CD8-positive, alpha-beta memory T cell (primary cell): ENCODE measurements at regions of chr15 and their contacts with region 1.

Region 1: DNA sequence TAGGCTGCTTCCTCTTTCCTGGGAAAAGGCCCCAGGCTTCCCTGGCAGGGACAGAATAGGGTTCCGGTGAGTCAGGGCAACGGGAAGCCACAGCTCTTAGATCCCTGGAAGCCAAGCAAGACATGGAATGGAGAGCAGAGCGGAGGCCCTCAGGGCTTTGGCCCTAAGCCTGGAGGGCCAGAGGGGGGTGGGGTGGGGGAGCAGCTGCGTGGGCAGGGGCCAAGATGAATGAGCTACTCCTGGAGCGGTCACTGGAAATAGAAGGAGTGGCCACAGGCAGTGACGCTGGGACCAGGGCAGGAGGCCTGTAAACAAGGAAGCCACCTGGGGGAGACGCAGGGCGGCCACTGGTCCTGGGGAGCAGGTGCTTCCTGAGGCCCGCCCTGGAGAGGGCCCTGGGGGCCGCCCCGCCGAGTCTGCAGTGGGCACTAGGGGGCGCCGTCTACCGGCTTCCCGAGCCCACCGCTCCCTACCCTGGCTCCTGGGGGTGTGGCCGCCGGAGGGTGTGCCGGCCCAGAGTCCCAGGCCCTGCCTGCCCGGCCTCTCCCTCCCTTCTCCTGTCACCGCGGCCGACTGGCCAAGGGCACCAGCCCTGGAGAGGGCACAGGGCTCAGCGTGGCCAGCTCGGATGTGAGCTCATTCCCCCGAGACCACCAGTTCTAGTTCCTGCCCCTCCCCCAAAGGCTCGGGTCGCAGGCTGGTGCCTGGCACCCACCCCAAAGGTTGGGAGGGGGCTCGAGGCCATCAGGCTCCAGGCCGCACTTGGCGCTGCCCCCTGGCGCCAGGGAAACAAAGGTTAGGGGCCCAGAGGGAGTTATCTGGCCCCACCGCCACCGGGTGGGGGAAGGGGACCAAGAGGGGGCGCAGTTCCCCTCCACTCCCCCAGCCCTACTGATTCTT is 12.1 kb downstream of the VPS18 start:
- DNase-seq: peak; percentile 63 to 77 (median 70)
- H3K4me3 ChIP-seq: peak overlapping the region; percentile 84
- H3K4me3 Mint-ChIP-seq: peak overlapping the region; percentile 81 to 91 (median 86)
- H3K27ac ChIP-seq: peak overlapping the region; percentile 59
- H3K27ac Mint-ChIP-seq: peak overlapping the region in 7 of 8 donors; percentile 35 to 95 (median 90)
- H3K4me1 ChIP-seq: peaks cover 26% of the 10 kb centered on the region
- H3K4me1 Mint-ChIP-seq: peaks cover 12 to 48% (median 25%) of the 10 kb centered on the region in 3 donors
- H3K27me3 ChIP-seq: no peaks in the 10 kb centered on the region
- H3K27me3 Mint-ChIP-seq: peaks cover 0 to 2% of the 10 kb centered on the region in 2 donors

Region 2: DNA sequence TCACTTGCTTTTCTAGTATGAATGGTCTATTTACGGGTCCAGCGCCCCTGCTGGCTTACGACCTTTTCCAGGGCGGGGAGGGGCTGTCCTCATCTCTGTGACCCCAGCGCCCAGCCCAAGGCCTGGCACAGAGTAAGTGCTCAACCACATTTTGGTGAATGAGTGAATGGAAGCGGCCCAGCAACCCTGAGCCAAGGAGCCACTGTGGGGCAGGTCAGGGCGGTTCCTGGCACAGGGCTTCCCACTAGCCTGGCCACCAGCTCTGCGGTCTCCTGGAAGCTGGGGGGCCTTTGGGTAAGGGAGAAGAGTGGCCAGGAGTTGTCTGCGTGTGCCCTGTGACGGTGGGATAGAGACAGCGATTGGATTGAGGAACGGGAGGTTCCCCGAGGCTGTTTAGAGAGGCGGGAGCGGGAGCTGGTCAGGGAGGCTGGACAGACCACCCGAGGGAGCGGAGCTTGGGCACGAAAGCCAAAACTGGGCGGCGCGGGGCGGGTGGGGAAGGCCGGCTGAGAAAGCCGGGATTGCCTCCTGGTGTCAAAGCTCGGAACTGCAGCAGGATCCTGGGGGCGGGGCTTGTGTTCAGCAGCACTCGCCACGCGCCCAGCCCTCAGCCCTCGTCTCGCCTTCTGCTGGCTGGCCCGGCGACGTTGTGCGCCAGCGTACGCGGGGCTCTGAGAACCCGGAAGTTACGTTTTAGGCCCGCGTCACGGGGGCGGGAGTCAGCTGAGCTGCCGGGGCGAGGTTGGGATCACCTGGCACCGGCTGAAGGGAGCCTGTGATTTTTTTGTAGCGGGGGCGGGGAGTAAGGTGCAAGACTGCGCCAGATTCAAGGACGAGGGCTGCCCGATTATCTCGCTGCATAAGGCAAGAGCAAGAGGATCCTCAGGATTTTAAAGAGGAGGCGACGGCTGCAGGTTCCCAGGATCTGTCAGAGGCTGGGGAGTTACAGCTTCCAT is 12.3 kb before region 1 on chr15 and contains the start of gene VPS18:
- CTCF ChIA-PET with region 1: interaction called, 76 read pairs
- POLR2A ChIA-PET with region 1: interaction called, 10 read pairs
- DNase-seq: peak; percentile 97 to 99 (median 98)
- H3K4me3 ChIP-seq: peak within 1 kb of the TSS; percentile 96
- H3K4me3 Mint-ChIP-seq: peak within 1 kb of the TSS; percentile 92 to 100 (median 99)
- H3K27ac ChIP-seq: peak within 1 kb of the TSS; percentile 90
- H3K27ac Mint-ChIP-seq: peak within 1 kb of the TSS; percentile 83 to 99 (median 98)
- H3K4me1 ChIP-seq: peaks cover 19% of the 10 kb centered on the region
- H3K4me1 Mint-ChIP-seq: peaks cover 43 to 52% (median 43%) of the 10 kb centered on the region in 3 donors
- H3K27me3 ChIP-seq: no peaks in the 10 kb centered on the region
- H3K27me3 Mint-ChIP-seq: peaks cover 0 to 2% of the 10 kb centered on the region in 2 donors
- total RNA-seq, gene VPS18: 17.2 to 17.8 TPM

Region 3: DNA sequence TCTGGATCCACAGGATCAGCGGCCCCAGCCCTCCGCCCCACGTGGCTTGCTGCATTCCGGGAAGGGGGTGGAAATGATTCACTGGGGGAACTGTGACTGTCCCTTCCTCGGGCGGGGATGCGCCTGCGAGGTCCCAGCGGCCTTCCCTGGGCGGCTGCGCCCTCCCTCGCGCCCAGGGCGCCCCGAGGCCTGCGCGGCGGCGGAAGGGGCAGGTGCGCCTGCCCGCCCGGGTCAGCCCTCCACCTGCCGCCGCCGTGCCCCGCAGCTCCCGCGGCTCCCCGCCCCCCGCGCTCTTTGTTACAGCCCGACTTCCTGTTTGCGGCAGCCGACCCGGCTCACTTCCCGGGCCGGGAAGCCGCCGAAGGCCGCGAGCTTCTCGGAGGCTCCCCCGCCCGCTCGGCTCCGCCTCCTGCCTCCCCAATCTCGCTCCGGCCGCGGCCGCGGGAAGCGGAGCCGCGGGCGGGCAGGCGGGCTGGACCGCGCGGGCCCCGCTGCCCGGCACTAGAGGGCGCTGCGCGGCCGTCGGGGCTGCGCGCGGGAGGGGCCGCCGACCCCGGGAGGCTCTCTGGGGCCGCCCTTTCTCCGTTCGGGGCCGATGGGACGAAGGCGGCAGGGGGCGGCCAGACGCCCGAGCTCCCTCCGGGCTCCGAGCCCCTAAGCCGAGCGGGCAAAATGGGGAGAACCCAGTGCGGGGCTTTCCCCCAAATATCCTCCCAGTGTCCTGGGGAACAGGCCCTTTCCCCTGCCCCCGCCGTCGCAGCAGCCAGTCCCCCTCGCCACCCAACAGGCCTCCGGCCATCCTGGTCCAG is 35.4 kb after region 1 on chr15:
- CTCF ChIA-PET with region 1: interaction called, 46 read pairs
- POLR2A ChIA-PET with region 1: no interaction called
- DNase-seq: peak; percentile 57 to 79 (median 70)
- H3K4me3 ChIP-seq: peak overlapping the region; percentile 73
- H3K4me3 Mint-ChIP-seq: peak overlapping the region; percentile 81 to 88 (median 82)
- H3K27ac ChIP-seq: peak overlapping the region; percentile 52
- H3K27ac Mint-ChIP-seq: peak overlapping the region in 5 of 8 donors; percentile 66 to 93 (median 76)
- H3K4me1 ChIP-seq: peaks cover 29% of the 10 kb centered on the region
- H3K4me1 Mint-ChIP-seq: peaks cover 18 to 35% (median 25%) of the 10 kb centered on the region in 3 donors
- H3K27me3 ChIP-seq: no peaks in the 10 kb centered on the region
- H3K27me3 Mint-ChIP-seq: no peaks in the 10 kb centered on the region

Region 4: GRCh38 chr15:41022487-41023090 is 116.2 kb after region 1 on chr15:
- CTCF ChIA-PET with region 1: interaction called, 56 read pairs
- POLR2A ChIA-PET with region 1: no interaction called
- DNase-seq: peak in 2 of 5 donors; percentile 13 to 33
- H3K4me3 ChIP-seq: no peak overlapping the region
- H3K4me3 Mint-ChIP-seq: no peak overlapping the region
- H3K27ac ChIP-seq: no peak overlapping the region
- H3K27ac Mint-ChIP-seq: no peak overlapping the region
- H3K4me1 ChIP-seq: no peaks in the 10 kb centered on the region
- H3K4me1 Mint-ChIP-seq: peaks cover 1 to 3% (median 2%) of the 10 kb centered on the region in 3 donors
- H3K27me3 ChIP-seq: no peaks in the 10 kb centered on the region
- H3K27me3 Mint-ChIP-seq: no peaks in the 10 kb centered on the region